ENCODE measurements at regions of chr1 and their contacts with region 1.

Region 1: DNA sequence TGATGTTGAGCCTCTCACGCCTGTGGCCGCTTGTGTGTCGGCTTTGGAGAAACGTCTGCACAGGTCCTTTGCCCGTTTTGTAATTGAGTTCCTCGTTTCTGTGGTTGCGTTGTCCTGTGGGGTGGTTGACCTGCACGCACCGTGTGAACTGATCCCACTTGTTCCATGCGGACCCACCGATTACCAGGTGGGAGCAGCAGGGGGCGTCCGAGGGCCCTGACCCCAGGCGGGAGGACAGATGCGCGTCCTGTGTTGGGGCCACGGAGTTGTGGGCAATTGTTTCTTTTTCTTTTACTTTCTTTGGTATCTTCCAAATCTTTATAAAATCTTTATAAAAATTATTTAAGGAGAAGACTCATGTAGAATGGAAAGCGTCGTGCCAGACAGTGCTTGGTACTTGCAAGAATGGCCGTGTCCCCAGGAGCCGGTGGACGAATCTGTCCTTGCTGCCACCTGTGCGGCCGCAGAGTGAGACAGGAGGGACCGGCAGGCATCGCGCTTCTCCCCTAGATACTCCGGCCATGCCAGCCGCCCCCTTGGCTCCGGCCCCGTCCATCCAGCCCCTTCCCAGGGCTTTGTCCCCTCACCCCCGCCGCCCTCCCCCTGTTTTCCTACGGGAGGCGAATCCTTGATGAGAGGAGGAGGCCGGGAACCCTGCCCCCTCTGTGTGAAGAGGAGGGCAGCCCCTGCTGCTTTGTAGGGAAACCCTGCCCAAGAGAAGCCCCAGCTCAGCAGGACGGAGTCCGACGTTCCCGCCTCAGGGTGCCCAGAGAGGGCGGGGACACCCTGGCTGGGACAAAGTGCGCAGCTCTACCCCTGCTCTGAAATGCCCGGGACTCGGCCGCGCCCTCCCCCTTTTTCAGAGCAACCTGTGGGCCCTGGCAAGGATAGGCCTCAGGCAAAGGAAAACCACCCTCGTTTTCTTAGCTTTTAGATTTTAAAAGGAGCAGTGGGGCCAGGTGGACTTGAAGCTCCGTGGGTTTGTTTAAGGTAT is 41.7 kb downstream of the PRKCZ start:
- DNase-seq: peak; percentile 33 to 80 (median 75)
- ATAC-seq: peak in 1 of 2 donors; percentile 38
- H3K4me3 ChIP-seq: no peak overlapping the region
- H3K27ac ChIP-seq: no peak overlapping the region
- H3K4me1 ChIP-seq: no peaks in the 10 kb centered on the region
- H3K27me3 ChIP-seq: no peaks in the 10 kb centered on the region

Region 2: GRCh38 chr1:2174348-2175054 is 82.6 kb after region 1 on chr1:
- intact Hi-C with region 1: loop called in 1 of 4 experiments (anchors 5 kb)
- DNase-seq: peak; percentile 63 to 86 (median 80)
- ATAC-seq: peak; percentile 67 to 80
- H3K4me3 ChIP-seq: peak overlapping the region; percentile 36
- H3K27ac ChIP-seq: no peak overlapping the region
- H3K4me1 ChIP-seq: no peaks in the 10 kb centered on the region
- H3K27me3 ChIP-seq: no peaks in the 10 kb centered on the region